CD4-positive, alpha-beta T cell (primary cell): ENCODE measurements at regions of chr13 and their contacts with region 1.

Region 1: GRCh38 chr13:102773441-102774215 is at the start of gene TEX30:
- DNase-seq: peak; percentile 73 to 94 (median 84)
- ATAC-seq: peak; percentile 96
- H3K4me3 ChIP-seq: peak within 1 kb of the TSS; percentile 81
- H3K4me3 Mint-ChIP-seq: peak within 1 kb of the TSS; percentile 97
- H3K27ac ChIP-seq: peak within 1 kb of the TSS; percentile 37 to 69
- H3K27ac Mint-ChIP-seq: peak within 1 kb of the TSS; percentile 94
- H3K4me1 ChIP-seq: peaks cover 20% of the 10 kb centered on the region
- H3K4me1 Mint-ChIP-seq: peaks cover 47% of the 10 kb centered on the region
- H3K27me3 ChIP-seq: no peaks in the 10 kb centered on the region
- H3K27me3 Mint-ChIP-seq: no peaks in the 10 kb centered on the region
- CTCF ChIP-seq: no peak
- total RNA-seq, gene TEX30: 4.6 to 6.3 TPM

Region 2: DNA sequence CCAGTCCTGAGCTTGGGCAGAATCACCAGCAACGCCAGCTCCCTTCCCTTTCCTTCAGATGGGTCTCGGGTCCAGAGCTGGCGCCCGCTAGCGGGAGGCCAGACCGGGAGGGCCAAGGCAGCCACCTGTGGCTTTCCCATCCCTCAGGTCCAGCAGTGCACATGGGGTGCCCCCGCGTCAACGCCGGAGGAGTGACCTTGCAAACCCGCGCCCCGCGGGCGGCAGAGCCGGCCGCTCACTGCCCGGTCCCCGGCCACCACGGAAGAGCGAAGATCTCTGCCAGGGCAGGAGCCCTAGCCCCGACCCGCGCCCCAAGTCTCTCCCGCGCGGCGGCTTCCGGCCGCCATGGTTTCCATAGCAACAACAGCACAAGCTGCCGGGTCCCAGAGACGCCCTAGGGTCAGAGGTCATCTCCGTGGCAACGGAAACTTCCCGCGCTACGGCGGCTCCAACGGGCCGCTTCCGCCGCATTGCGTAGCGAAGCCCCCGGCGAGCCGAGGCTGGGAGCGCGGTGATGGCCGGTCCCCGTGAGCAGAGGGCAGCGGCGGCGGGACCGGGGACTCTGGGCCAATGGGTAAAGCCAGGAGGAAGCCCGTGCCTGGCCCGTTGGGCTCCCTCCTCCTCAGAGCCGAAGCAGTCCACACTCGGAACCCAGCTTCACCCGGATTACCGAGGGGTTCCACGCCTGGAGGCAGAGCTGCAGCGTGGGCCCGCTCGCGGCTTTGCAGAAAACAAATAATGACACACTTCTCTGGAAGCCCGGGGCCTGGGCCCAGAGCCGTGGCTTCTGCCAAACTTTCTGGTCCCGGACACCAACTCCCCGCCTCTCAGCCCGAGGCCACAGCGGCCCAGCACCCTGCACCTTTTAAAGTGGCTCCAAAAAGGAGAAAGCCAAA is 379.2 kb before region 1 on chr13:
- CTCF ChIA-PET with region 1: no interaction called
- POLR2A ChIA-PET with region 1: interaction called, 3 read pairs
- intact Hi-C with region 1: loop called in 1 of 2 experiments (anchors 5 kb)
- DNase-seq: peak; percentile 93 to 98 (median 96)
- ATAC-seq: peak; percentile 94
- H3K4me3 ChIP-seq: peak overlapping the region; percentile 80
- H3K4me3 Mint-ChIP-seq: peak overlapping the region; percentile 95
- H3K27ac ChIP-seq: peak overlapping the region in 1 of 2 donors; percentile 50
- H3K27ac Mint-ChIP-seq: peak overlapping the region; percentile 77
- H3K4me1 ChIP-seq: peaks cover 18% of the 10 kb centered on the region
- H3K4me1 Mint-ChIP-seq: peaks cover 19% of the 10 kb centered on the region
- H3K27me3 ChIP-seq: peaks cover 3 to 6% of the 10 kb centered on the region in 2 experiments
- H3K27me3 Mint-ChIP-seq: peaks cover 20% of the 10 kb centered on the region
- CTCF ChIP-seq: no peak

Region 3: GRCh38 chr13:102680842-102681740 is 92.5 kb before region 1 on chr13:
- CTCF ChIA-PET with region 1: no interaction called
- POLR2A ChIA-PET with region 1: no interaction called
- intact Hi-C with region 1: loop called (anchors 5 to 10 kb)
- DNase-seq: peak in 4 of 14 experiments; percentile 14 to 50 (median 28)
- ATAC-seq: peak; percentile 82
- H3K4me3 ChIP-seq: no peak overlapping the region
- H3K4me3 Mint-ChIP-seq: no peak overlapping the region
- H3K27ac ChIP-seq: no peak overlapping the region
- H3K27ac Mint-ChIP-seq: peak overlapping the region; percentile 47
- H3K4me1 ChIP-seq: peaks cover 2% of the 10 kb centered on the region
- H3K4me1 Mint-ChIP-seq: peaks cover 20% of the 10 kb centered on the region
- H3K27me3 ChIP-seq: no peaks in the 10 kb centered on the region
- H3K27me3 Mint-ChIP-seq: no peaks in the 10 kb centered on the region
- CTCF ChIP-seq: no peak

Region 4: DNA sequence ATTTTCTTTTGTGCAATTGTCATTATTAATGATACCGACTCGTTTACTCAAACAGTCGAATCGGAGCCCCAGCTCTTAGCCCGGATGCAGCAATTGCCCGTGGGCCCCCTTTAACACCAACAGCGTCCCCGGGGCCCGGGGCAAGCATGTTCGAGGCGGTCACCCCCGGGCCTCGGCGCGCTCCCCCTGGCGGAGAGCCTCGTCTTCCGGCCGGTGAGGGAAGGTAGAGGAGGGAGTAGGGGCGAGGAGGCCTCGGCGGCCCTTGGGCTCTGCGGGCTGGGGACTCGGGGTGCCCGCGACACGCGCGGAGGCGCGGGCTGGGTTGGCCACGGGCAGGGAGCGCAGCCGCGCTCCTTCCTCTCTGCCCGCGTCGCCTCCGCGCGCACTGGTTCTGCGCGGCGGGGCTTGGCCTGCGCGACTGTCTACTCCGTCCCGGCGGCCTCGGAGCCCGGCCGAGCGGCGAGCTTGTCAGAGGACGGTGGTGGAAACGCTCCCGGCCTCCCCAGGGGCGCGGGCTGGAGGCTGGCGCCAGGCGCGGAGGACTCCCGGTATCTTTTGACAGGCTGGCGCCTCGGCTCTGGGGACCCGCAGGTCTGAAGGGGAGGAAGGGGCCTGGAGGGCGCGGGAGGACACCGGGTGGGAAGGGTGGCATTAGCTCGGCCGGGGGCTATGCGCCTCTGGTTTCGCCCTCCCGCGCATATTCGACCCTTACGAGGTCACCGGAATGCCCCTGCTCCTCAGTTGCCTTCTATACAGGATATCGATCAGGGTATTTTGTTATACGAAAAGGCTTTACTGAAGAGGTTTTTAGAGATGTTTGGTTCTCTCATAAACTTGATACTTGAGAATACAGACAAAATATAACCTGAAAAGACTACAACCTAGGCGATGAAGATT is 26.8 kb after region 1 on chr13:
- CTCF ChIA-PET with region 1: interaction called, 7 read pairs
- POLR2A ChIA-PET with region 1: interaction called, 18 read pairs
- intact Hi-C with region 1: loop called in 1 of 2 experiments (anchors 2 kb)
- DNase-seq: peak; percentile 58 to 90 (median 75)
- ATAC-seq: peak; percentile 76
- H3K4me3 ChIP-seq: peak overlapping the region; percentile 77
- H3K4me3 Mint-ChIP-seq: peak overlapping the region; percentile 94
- H3K27ac ChIP-seq: no peak overlapping the region
- H3K27ac Mint-ChIP-seq: peak overlapping the region; percentile 66
- H3K4me1 ChIP-seq: peaks cover 31% of the 10 kb centered on the region
- H3K4me1 Mint-ChIP-seq: peaks cover 29% of the 10 kb centered on the region
- H3K27me3 ChIP-seq: peaks cover 6 to 18% of the 10 kb centered on the region in 2 experiments
- H3K27me3 Mint-ChIP-seq: peaks cover 28% of the 10 kb centered on the region
- CTCF ChIP-seq: peak; percentile 69

Region 5: DNA sequence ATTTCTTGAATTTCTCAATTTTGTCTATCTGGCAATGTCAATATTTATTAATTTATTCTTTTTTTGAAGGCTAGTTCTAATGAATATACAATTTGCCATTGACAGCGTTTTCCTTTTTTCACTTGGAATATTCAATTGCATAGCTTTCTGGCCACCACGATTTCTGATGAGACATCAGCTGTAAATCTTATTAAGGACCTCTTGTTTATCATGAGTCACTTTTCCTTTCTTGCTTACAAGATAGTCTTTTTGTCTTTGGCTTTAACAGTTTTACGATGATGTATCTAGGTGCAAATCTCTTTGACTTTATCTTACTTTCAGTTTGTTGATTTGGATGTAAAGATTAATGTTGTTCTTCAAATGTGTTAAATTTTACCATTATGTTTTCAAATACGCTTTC is 1284.2 kb after region 1 on chr13:
- CTCF ChIA-PET with region 1: no interaction called
- POLR2A ChIA-PET with region 1: no interaction called
- intact Hi-C with region 1: no loop called
- DNase-seq: no peak
- ATAC-seq: no peak
- H3K4me3 ChIP-seq: no peak overlapping the region
- H3K4me3 Mint-ChIP-seq: no peak overlapping the region
- H3K27ac ChIP-seq: no peak overlapping the region
- H3K27ac Mint-ChIP-seq: no peak overlapping the region
- H3K4me1 ChIP-seq: no peaks in the 10 kb centered on the region
- H3K4me1 Mint-ChIP-seq: no peaks in the 10 kb centered on the region
- H3K27me3 ChIP-seq: no peaks in the 10 kb centered on the region
- H3K27me3 Mint-ChIP-seq: no peaks in the 10 kb centered on the region
- CTCF ChIP-seq: no peak